ENCODE measurements at regions of chr6 and their contacts with region 1.

Region 1: GRCh38 chr6:138588805-138589434 is 89.6 kb upstream of the NHSL1 start:
- DNase-seq: peak; percentile 78
- H3K4me3 ChIP-seq: no peak overlapping the region
- H3K27ac ChIP-seq: no peak overlapping the region
- H3K4me1 ChIP-seq: peaks cover 21% of the 10 kb centered on the region
- H3K27me3 ChIP-seq: no peaks in the 10 kb centered on the region
- CTCF ChIP-seq: peak; percentile 80 to 85
- POLR2A ChIP-seq: no peak

Region 2: DNA sequence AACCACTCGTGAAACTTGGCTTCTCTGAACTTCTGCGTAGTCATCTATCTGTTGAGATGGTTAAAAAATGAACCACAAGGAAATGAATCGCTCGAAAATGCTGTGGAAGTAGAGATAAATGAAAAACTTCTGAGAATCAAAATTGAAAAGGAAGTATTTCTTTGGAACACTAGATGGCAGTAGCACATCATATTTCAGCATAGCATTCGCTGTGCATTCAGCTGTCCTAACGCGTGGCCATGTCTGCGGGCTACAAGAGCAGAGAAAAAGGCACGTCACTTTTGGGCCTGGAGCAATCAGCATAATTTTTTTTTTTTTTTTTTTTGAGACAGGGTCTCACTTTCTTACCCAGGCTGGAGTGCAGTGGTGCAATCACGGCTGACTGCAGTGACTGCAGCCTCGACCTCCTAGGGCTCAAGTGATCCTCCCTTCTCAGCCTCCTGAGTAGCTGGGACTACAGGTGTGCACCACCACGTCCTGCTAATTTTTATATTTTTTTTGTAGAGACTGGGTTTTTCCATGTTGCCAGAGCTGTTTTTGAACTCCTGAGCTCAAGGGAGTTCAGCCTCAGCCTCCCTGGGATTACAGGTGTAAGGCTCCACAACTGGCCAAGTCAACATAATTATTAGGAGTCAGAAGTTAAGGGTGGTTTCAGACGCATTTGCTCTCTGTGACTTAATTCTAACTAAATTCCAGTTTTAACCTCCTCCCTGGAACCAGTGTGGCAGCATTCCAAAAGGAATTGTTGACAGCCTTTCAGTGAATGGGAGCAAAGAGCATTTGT is 472.9 kb before region 1 on chr6:
- CTCF ChIA-PET with region 1: interaction called, 8 read pairs
- POLR2A ChIA-PET with region 1: no interaction called
- dilution Hi-C with region 1: no loop called
- intact Hi-C with region 1: loop called (anchors 1 kb)
- DNase-seq: peak; percentile 71
- H3K4me3 ChIP-seq: no peak overlapping the region
- H3K27ac ChIP-seq: no peak overlapping the region
- H3K4me1 ChIP-seq: no peaks in the 10 kb centered on the region
- H3K27me3 ChIP-seq: peaks cover 5 to 8% of the 10 kb centered on the region in 2 experiments
- CTCF ChIP-seq: peak; percentile 42 to 44
- POLR2A ChIP-seq: no peak

Region 3: GRCh38 chr6:138428944-138429598 is 159.8 kb before region 1 on chr6:
- CTCF ChIA-PET with region 1: interaction called, 12 read pairs
- POLR2A ChIA-PET with region 1: no interaction called
- dilution Hi-C with region 1: no loop called
- intact Hi-C with region 1: loop called (anchors 1 kb)
- DNase-seq: peak; percentile 62
- H3K4me3 ChIP-seq: no peak overlapping the region
- H3K27ac ChIP-seq: no peak overlapping the region
- H3K4me1 ChIP-seq: no peaks in the 10 kb centered on the region
- H3K27me3 ChIP-seq: no peaks in the 10 kb centered on the region
- CTCF ChIP-seq: peak; percentile 36 to 41
- POLR2A ChIP-seq: no peak

Region 4: DNA sequence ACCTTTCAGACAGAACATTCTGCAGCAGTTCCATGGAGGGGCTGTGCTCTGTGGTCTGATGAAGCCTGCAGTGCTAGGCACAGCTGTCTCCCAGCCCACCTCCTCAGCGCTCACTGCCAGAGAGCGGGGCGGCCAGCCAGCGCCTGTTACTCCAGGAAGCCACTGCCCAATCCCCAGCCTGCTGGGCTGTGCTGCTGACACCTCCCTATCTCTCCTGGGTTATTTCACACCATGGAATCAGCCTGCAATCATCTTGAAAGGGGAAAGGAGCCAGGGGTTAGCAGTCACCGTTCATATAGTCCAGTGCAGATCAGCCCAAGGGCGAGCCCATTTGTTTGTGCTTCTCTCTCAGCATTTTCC is 43.3 kb before region 1 on chr6:
- CTCF ChIA-PET with region 1: interaction called, 3 read pairs
- POLR2A ChIA-PET with region 1: no interaction called
- dilution Hi-C with region 1: no loop called
- intact Hi-C with region 1: loop called (anchors 1 kb)
- DNase-seq: peak; percentile 87
- H3K4me3 ChIP-seq: peak overlapping the region in 2 of 3 experiments; percentile 37 to 76
- H3K27ac ChIP-seq: peak overlapping the region; percentile 94
- H3K4me1 ChIP-seq: peaks cover 61% of the 10 kb centered on the region
- H3K27me3 ChIP-seq: no peaks in the 10 kb centered on the region
- CTCF ChIP-seq: no peak
- POLR2A ChIP-seq: peak; percentile 80

Region 5: GRCh38 chr6:138692058-138692977 is 103.4 kb after region 1 on chr6:
- CTCF ChIA-PET with region 1: interaction called, 33 read pairs
- POLR2A ChIA-PET with region 1: no interaction called
- dilution Hi-C with region 1: no loop called
- intact Hi-C with region 1: loop called (anchors 1 kb)
- DNase-seq: peak; percentile 68
- H3K4me3 ChIP-seq: peak overlapping the region; percentile 74 to 90 (median 75)
- H3K27ac ChIP-seq: peak overlapping the region; percentile 46
- H3K4me1 ChIP-seq: peaks cover 25% of the 10 kb centered on the region
- H3K27me3 ChIP-seq: no peaks in the 10 kb centered on the region
- CTCF ChIP-seq: peak; percentile 82 to 93
- POLR2A ChIP-seq: no peak

Region 6: GRCh38 chr6:138773177-138774091 is 184.5 kb after region 1 on chr6 and contains the start of gene CCDC28A:
- CTCF ChIA-PET with region 1: interaction called, 3 read pairs
- POLR2A ChIA-PET with region 1: no interaction called
- dilution Hi-C with region 1: no loop called
- intact Hi-C with region 1: loop called (anchors 1 kb)
- DNase-seq: peak; percentile 97
- H3K4me3 ChIP-seq: peak within 1 kb of the TSS; percentile 61 to 84 (median 83)
- H3K27ac ChIP-seq: peak within 1 kb of the TSS; percentile 95
- H3K4me1 ChIP-seq: peaks cover 23% of the 10 kb centered on the region
- H3K27me3 ChIP-seq: no peaks in the 10 kb centered on the region
- CTCF ChIP-seq: no peak
- POLR2A ChIP-seq: no peak
- total RNA-seq, gene CCDC28A: 10.5 and 12.8 TPM in 2 replicates

Measured in endothelial cell of umbilical vein (primary cell).